AG04450 (cell line): ENCODE measurements at regions of chr2 and their contacts with region 1.

Region 1: DNA sequence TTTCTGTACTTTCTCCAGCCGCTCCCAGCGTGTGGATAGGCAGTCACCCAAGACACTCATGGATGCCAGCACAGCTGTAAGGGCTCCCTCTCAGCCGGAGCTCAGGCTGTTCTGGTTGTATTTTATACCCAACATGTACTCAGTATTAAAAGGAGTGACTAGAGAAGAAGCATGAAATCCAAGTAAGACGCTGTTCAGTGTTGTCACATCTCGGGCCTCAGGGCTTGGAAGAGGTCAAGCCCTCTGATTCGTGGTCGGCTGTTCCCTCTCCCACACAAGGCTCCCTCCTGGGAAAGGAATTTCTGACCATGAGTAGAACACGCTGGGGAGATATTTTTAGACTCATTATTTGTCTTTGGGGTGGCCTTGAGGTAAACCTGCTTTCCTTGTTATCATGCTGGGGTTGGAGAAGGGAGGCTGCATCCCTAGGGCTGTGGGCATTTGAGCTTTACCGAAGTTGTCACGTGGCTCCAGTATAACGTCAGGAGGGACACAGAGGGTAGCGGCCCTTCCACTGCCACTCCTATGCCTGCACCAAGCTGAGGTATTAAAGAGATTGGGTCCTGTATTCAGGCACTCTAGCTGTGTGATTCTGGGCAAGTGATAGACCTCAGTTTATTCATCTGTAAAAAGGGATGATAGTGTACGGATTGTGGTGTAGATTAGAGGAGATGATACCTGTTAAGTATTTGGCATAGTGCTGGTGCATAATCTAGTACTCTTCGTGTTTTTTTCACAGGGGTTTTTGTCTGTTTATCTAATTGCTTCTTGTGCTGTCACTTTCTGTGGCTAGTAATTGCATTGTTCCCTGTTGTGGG is 34.1 kb downstream of the HK2 start:
- DNase-seq: no peak
- H3K4me3 ChIP-seq: no peak overlapping the region
- H3K27ac ChIP-seq: peak overlapping the region; percentile 55
- H3K27me3 ChIP-seq: no peaks in the 10 kb centered on the region
- CTCF ChIP-seq: no peak

Region 2: DNA sequence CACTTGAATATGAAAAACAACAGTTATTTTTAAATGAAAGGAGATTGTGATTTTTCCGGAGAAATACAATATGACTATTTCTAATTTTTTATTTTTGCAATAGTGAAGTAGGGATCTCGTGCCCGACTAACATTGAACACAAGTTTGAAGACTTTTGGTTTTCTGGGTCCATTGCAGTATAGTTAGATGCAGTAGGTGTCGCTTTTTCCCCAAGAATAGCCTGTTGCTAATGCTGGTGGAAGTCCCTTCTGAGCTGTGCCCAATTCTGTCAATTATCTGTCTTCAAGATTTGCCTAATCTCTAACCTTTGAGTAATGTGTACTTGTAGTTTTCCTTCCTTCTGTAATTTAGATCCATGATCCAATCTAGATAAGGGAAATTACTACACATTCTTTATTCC is 177.5 kb before region 1 on chr2:
- CTCF ChIA-PET with region 1: interaction called, 148 read pairs
- POLR2A ChIA-PET with region 1: no interaction called
- DNase-seq: peak; percentile 41
- H3K4me3 ChIP-seq: no peak overlapping the region
- H3K27ac ChIP-seq: no peak overlapping the region
- H3K27me3 ChIP-seq: no peaks in the 10 kb centered on the region
- CTCF ChIP-seq: peak; percentile 88